H1 (cell line): ENCODE measurements at regions of chr1 and their contacts with region 1.

Region 1: GRCh38 chr1:155978325-155978972 is at the start of gene ARHGEF2:
- DNase-seq: peak; percentile 78 to 90
- H3K4me3 ChIP-seq: peak within 1 kb of the TSS; percentile 77 to 97 (median 90)
- H3K27ac ChIP-seq: peak within 1 kb of the TSS; percentile 88
- H3K4me1 ChIP-seq: peaks cover 31 to 49% (median 33%) of the 10 kb centered on the region in 4 experiments
- H3K27me3 ChIP-seq: no peaks in the 10 kb centered on the region
- CTCF ChIP-seq: peak; percentile 56 to 67 (median 65)
- EP300 ChIP-seq: no peak; a peak in 1 of 3 replicates
- POLR2A ChIP-seq: peak; percentile 55 to 63
- RAD21 ChIP-seq: peak; percentile 38 to 56
- total RNA-seq, gene ARHGEF2: 68.3 and 80.5 TPM in 2 replicates

Region 2: GRCh38 chr1:155847823-155848529 is 130.5 kb before region 1 on chr1:
- CTCF ChIA-PET with region 1: no interaction called
- POLR2A ChIA-PET with region 1: no interaction called
- DNase-seq: no peak
- H3K4me3 ChIP-seq: no peak overlapping the region
- H3K27ac ChIP-seq: no peak overlapping the region
- H3K4me1 ChIP-seq: no peaks in the 10 kb centered on the region
- H3K27me3 ChIP-seq: no peaks in the 10 kb centered on the region
- CTCF ChIP-seq: no peak
- EP300 ChIP-seq: no peak
- POLR2A ChIP-seq: no peak
- RAD21 ChIP-seq: no peak

Region 3: DNA sequence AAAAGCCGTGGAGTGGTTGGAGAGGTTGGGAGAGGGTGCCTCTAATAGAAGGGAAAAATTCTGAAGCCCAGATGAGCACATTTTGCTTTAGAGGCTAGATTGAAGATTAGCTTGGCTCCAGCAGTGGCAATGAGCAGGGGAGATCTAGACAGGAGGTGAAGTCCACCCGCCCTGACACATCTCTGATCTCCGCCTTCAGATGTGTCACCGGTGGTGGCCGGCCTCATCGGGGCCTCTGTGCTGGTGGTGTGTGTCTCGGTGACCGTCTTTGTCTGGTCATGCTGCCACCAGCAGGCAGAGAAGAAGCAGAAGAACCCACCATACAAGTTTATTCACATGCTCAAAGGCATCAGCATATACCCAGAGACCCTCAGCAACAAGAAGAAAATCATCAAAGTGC is 110.7 kb before region 1 on chr1:
- CTCF ChIA-PET with region 1: no interaction called
- POLR2A ChIA-PET with region 1: no interaction called
- DNase-seq: no peak
- H3K4me3 ChIP-seq: no peak overlapping the region
- H3K27ac ChIP-seq: no peak overlapping the region
- H3K4me1 ChIP-seq: no peaks in the 10 kb centered on the region
- H3K27me3 ChIP-seq: no peaks in the 10 kb centered on the region
- CTCF ChIP-seq: no peak
- EP300 ChIP-seq: no peak
- POLR2A ChIP-seq: no peak
- RAD21 ChIP-seq: no peak

Region 4: DNA sequence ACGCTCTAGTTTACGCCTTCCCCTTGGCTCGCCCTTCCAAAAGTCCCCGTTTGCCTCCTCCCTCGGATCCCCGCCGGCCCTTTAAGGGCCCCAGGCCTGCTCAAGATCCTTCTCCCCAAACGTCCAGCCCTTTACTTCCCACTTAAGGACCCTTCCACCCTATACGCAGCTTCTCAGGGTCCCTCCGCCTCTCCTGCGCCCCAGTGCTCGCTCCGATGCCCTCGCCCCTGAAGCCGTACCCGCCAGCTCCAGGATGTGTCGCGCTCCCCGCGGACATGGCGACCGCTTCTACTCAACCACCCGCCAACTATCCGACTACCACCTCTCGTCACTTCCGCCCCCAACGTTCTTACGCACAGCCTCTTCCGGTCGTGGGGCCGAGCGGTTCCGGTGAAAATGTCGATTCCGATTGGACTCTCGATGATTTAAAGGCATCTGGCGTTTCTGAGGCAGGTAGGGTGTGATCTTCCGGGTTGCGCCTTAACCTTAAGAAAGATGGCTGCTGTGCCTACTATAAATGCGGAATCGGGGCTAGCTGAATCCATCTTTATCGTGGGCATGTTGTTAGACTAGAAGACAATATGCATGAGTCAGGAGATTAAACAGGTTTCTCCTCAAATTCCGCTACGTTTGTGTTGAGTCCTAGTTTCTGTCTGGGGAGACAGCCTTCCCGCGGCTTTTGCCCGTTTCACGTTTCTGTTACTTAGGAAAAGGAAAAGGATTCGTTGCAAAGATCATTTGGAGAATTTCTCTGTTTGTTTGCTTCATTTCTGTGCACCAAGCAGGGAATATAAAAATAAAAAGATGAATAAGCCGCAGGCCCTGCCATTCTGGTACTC is 44.1 kb before region 1 on chr1 and contains the start of gene KHDC4:
- CTCF ChIA-PET with region 1: interaction called, 25 read pairs
- POLR2A ChIA-PET with region 1: interaction called, 27 read pairs
- DNase-seq: peak; percentile 87 to 96
- H3K4me3 ChIP-seq: peak within 1 kb of the TSS; percentile 89 to 100 (median 94)
- H3K27ac ChIP-seq: peak within 1 kb of the TSS; percentile 88
- H3K4me1 ChIP-seq: peaks cover 0 to 2% (median 1%) of the 10 kb centered on the region in 4 experiments; a peak in 4 of 7 replicates
- H3K27me3 ChIP-seq: no peaks in the 10 kb centered on the region
- CTCF ChIP-seq: no peak
- EP300 ChIP-seq: no peak
- POLR2A ChIP-seq: peak; percentile 91 to 96
- RAD21 ChIP-seq: peak in 1 of 2 experiments; percentile 10; a peak in 2 of 4 replicates
- total RNA-seq, gene KHDC4: 53.4 and 56.6 TPM in 2 replicates

Region 5: DNA sequence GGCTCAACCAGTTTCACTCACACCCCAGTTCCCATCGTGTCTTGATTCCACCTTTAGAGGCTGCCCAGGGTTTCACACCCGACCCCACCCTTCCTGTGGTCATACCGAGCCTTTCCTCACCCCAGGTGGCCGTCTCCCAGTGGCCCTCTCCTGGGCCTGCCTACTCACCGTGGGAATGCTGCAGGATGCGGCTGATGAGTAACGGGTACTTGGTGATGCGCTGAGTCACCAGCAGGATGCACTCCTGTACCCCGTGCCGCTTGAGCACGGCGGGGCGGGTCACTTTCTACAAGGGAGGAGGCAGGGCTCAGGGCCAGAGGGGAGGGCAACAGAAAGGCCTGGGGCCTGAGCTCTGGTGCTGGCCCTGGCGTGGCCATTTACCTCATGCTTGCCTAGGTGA is 16.5 kb before region 1 on chr1:
- CTCF ChIA-PET with region 1: interaction called, 79 read pairs
- POLR2A ChIA-PET with region 1: interaction called, 282 read pairs
- DNase-seq: no peak
- H3K4me3 ChIP-seq: no peak overlapping the region
- H3K27ac ChIP-seq: no peak overlapping the region
- H3K4me1 ChIP-seq: peaks cover 0 to 4% (median 0%) of the 10 kb centered on the region in 4 experiments; a peak in 1 of 7 replicates
- H3K27me3 ChIP-seq: no peaks in the 10 kb centered on the region
- CTCF ChIP-seq: peak in 2 of 3 experiments; percentile 17 to 25; a peak in 2 of 4 replicates
- EP300 ChIP-seq: no peak
- POLR2A ChIP-seq: no peak
- RAD21 ChIP-seq: peak; percentile 10 to 33; a peak in 3 of 4 replicates

Region 6: GRCh38 chr1:156006666-156007376 is 28.4 kb after region 1 on chr1:
- CTCF ChIA-PET with region 1: interaction called, 7 read pairs
- POLR2A ChIA-PET with region 1: interaction called, 17 read pairs
- DNase-seq: no peak
- H3K4me3 ChIP-seq: no peak overlapping the region
- H3K27ac ChIP-seq: no peak overlapping the region
- H3K4me1 ChIP-seq: peaks cover 0 to 4% (median 1%) of the 10 kb centered on the region in 4 experiments; a peak in 3 of 7 replicates
- H3K27me3 ChIP-seq: no peaks in the 10 kb centered on the region
- CTCF ChIP-seq: no peak
- EP300 ChIP-seq: no peak
- POLR2A ChIP-seq: no peak
- RAD21 ChIP-seq: no peak

Region 7: DNA sequence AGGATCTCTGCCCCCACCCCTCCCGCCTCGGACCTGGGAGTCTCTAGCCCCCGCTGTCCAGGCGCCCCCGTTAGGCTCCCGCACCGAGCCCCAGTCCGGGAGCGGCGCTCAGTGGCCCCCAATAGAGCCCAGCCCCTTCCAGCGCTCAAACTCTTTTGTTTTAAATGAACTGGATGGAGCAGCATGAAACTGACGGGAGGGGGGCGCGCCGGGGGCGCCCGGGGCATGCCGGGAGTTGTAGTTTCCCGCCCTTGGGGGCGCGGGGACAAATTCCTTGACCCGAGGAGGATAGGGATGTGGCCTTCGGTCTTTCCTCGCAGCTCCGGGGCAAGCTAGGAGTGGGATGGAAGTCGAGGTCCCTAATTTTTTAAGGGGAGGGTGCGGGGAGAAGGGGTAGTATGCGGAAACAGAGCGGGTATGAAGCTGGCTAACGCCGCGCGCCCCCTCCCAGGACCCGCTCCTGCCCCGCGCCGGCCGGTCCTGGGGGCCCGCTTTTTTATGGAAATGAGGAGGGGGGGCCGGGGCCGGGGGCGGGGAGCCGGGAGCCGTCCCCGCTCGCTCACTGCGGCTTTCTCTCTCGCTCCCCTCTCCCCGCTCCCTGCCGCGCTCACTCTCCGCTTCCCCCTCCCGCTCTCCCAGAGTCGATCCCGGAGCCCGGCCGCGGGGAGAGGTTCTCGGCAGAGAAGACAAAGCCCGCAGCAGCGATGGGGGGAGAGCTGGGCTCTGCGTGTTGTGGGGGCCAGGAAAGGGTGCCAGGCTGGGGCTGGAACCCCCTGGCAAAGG is 104.1 kb after region 1 on chr1 and contains the start of gene MEX3A:
- CTCF ChIA-PET with region 1: interaction called, 4 read pairs
- POLR2A ChIA-PET with region 1: interaction called, 26 read pairs
- DNase-seq: peak; percentile 92 to 98
- H3K4me3 ChIP-seq: peak within 1 kb of the TSS; percentile 86 to 98 (median 94)
- H3K27ac ChIP-seq: peak within 1 kb of the TSS; percentile 86
- H3K4me1 ChIP-seq: peaks cover 10 to 23% (median 13%) of the 10 kb centered on the region in 4 experiments
- H3K27me3 ChIP-seq: no peaks in the 10 kb centered on the region
- CTCF ChIP-seq: no peak
- EP300 ChIP-seq: peak in 1 of 2 experiments; percentile 60; a peak in 1 of 3 replicates
- POLR2A ChIP-seq: peak; percentile 48 to 54; a peak in 2 of 3 replicates
- RAD21 ChIP-seq: no peak
- total RNA-seq, gene MEX3A: 52.4 and 54.7 TPM in 2 replicates